Activated T-helper 2 cell treated with anti-CD3 and anti-CD28 coated beads, Interferon-gamma antibody, Interleukin-2, Interleukin-4, amounts not matched to agents 10 μg/mL and 5 μg/mL and 100 μg/mL, durations not matched to agents 14 hours and 24 hours and 36 hours (primary cell): ENCODE measurements at regions of chrX and their contacts with region 1.

Region 1: GRCh38 chrX:15202454-15203143 is 67.3 kb downstream of the ASB9 start:
- DNase-seq: no peak
- H3K4me3 Mint-ChIP-seq: no peak overlapping the region
- H3K27ac Mint-ChIP-seq: no peak overlapping the region
- H3K4me1 Mint-ChIP-seq: peaks cover 30% of the 10 kb centered on the region
- H3K27me3 Mint-ChIP-seq: peaks cover 9% of the 10 kb centered on the region

Region 2: DNA sequence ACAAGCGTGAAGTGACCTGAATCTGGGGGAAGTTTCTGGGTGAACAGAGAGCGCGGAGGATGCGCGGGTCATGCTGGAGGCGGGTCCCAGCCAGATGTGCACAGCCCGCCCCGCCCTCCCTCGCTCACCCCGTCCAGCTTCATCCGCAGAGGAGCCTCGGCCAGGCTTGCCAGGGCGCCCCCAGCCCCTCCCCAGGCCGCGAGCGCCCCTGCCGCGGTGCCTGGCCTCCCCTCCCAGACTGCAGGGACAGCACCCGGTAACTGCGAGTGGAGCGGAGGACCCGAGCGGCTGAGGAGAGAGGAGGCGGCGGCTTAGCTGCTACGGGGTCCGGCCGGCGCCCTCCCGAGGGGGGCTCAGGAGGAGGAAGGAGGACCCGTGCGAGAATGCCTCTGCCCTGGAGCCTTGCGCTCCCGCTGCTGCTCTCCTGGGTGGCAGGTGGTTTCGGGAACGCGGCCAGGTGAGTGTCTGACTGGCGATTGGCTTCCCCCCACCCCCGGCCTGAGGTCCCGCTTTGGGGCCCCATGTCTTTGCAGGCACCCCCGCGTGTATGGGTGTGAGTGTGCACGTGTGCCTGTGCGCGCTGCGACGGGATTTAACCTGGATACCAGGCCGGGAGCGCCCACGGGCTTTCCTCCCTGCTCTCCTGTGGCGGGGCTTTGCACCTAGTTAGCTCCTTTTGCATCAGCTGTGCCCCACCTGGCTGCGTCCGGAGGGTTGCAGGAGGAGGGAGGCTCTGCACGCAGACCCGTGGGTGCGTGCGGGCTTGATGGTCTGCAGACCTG is 1632.9 kb before region 1 on chrX and contains the start of gene EGFL6:
- intact Hi-C with region 1: loop called (anchors 5 kb)
- DNase-seq: no peak
- H3K4me3 Mint-ChIP-seq: peak within 1 kb of the TSS; percentile 69
- H3K27ac Mint-ChIP-seq: no peak within 1 kb of the TSS
- H3K4me1 Mint-ChIP-seq: peaks cover 33% of the 10 kb centered on the region
- H3K27me3 Mint-ChIP-seq: peaks cover 29% of the 10 kb centered on the region
- total RNA-seq, gene EGFL6: 2.3 and 3.4 TPM in 2 replicates

Region 3: GRCh38 chrX:14872851-14873675 is 329.5 kb before region 1 on chrX and contains the starts of genes FANCB and MOSPD2:
- intact Hi-C with region 1: loop called (anchors 1 kb)
- DNase-seq: peak; percentile 93
- H3K4me3 Mint-ChIP-seq: peak within 1 kb of the TSS; percentile 83
- H3K27ac Mint-ChIP-seq: peak within 1 kb of the TSS; percentile 80
- H3K4me1 Mint-ChIP-seq: peaks cover 27% of the 10 kb centered on the region
- H3K27me3 Mint-ChIP-seq: no peaks in the 10 kb centered on the region
- total RNA-seq, gene FANCB: 14.2 and 14.6 TPM in 2 replicates
- total RNA-seq, gene MOSPD2: 12.6 and 14.8 TPM in 2 replicates

Region 4: GRCh38 chrX:15127014-15127413 is 75.6 kb before region 1 on chrX:
- intact Hi-C with region 1: no loop called
- DNase-seq: no peak
- H3K4me3 Mint-ChIP-seq: no peak overlapping the region
- H3K27ac Mint-ChIP-seq: no peak overlapping the region
- H3K4me1 Mint-ChIP-seq: peaks cover 6% of the 10 kb centered on the region
- H3K27me3 Mint-ChIP-seq: peaks cover 2% of the 10 kb centered on the region

Region 5: DNA sequence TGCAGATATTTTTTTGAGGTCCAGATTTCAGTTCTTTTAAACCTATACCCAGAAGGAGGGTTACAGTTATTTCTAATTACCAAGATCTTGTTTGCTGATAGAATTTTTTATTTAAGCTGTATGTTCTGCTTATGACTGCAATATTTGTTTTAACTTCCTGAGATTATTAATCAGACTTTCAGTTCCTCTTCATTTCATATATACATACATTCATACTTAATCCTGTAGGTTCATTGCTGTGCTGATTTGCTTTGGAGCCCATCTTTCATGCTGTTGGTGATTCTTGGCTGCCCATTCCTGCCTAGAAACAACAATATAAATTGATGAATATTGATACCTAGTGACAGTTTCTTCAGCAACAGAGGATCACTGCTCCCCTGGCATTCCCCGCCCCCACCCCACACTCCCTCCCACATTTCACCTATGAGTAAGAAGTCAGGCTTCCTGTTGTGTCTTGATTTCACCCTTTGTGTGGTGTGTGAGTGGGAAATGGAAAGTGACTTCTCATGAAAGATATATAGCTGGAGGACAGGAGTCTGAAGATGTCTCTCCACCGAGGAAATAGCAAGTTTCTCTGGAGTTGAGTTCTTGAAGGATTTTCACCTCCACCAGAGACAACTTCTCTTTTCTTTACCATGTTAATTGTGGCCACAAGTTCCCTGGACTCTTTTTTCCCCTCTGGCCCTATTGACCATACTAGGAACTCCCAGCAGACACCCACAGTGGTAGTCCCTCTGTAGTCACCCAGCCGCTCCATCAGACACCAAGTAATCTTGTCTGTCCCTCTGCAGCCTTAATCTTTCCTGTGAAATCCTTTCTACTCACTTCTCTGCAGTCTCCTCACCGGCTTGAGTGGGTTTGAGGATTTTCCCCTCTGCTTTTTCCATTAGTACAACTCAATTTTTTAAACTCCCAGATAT is 51.1 kb before region 1 on chrX:
- intact Hi-C with region 1: loop called (anchors 1 kb)
- DNase-seq: no peak
- H3K4me3 Mint-ChIP-seq: no peak overlapping the region
- H3K27ac Mint-ChIP-seq: peak overlapping the region; percentile 38
- H3K4me1 Mint-ChIP-seq: peaks cover 21% of the 10 kb centered on the region
- H3K27me3 Mint-ChIP-seq: peaks cover 7% of the 10 kb centered on the region

Region 6: DNA sequence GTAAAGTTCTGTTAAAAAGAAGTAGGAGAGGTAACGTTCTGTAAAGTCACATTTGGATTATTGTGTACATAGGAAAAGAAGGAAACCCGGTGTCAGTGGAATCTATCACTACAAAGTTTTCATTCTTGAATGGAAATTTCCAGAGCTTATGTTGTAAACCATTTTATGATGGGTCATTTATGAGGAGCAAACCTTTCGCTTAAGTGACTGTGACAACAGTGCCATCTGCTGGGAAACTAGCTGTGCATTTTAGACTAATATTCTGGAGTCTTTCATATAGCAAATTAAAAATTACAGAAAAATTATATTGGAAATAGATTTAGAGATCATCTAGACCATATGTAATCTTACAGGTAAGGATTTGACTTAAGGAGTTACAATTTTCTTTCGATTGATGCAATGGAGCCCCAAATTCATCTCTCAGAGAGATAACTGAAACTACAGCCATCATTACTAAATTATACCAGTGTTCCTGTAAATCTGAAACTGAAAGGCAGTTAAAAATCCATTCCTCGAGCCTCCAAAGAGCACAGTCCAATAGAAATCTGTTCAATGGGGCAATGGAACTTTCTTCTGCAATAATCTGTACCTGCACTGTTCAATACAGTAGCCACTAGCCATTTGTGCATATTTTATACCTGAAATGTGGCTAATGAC is 40.4 kb after region 1 on chrX:
- intact Hi-C with region 1: loop called (anchors 2 kb)
- DNase-seq: no peak
- H3K4me3 Mint-ChIP-seq: no peak overlapping the region
- H3K27ac Mint-ChIP-seq: no peak overlapping the region
- H3K4me1 Mint-ChIP-seq: peaks cover 10% of the 10 kb centered on the region
- H3K27me3 Mint-ChIP-seq: peaks cover 2% of the 10 kb centered on the region

Region 7: GRCh38 chrX:15254852-15255251 is 52.3 kb after region 1 on chrX:
- intact Hi-C with region 1: no loop called
- DNase-seq: no peak
- H3K4me3 Mint-ChIP-seq: no peak overlapping the region
- H3K27ac Mint-ChIP-seq: no peak overlapping the region
- H3K4me1 Mint-ChIP-seq: no peaks in the 10 kb centered on the region
- H3K27me3 Mint-ChIP-seq: no peaks in the 10 kb centered on the region

Region 8: DNA sequence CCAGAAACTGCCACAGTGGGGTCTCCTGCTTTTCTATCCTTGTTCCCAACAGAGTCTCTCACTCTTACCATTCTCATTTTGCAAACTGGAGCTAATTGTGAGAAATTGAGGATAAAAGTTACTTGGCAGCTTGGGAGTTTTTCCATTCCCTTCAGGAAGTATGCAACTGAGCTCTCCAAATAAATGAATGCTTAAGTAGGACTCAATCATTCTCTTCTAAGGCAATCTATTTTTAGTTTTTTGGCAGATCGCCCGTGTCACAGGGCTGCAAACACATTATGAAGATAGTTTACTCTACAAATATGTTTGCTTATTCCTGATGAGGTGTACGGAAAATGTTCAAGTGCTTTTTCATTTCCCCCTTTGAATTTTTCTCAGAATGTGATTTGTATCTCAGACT is 107.5 kb after region 1 on chrX:
- intact Hi-C with region 1: no loop called
- DNase-seq: no peak
- H3K4me3 Mint-ChIP-seq: no peak overlapping the region
- H3K27ac Mint-ChIP-seq: no peak overlapping the region
- H3K4me1 Mint-ChIP-seq: no peaks in the 10 kb centered on the region
- H3K27me3 Mint-ChIP-seq: no peaks in the 10 kb centered on the region

Region 9: GRCh38 chrX:15384304-15384703 is 181.7 kb after region 1 on chrX and contains the start of gene VEGFD:
- intact Hi-C with region 1: no loop called
- DNase-seq: no peak
- H3K4me3 Mint-ChIP-seq: no peak within 1 kb of the TSS
- H3K27ac Mint-ChIP-seq: no peak within 1 kb of the TSS
- H3K4me1 Mint-ChIP-seq: no peaks in the 10 kb centered on the region
- H3K27me3 Mint-ChIP-seq: no peaks in the 10 kb centered on the region
- total RNA-seq, gene VEGFD: not detected in 2 replicates